ENCODE measurements at regions of chr3 and their contacts with region 1.

Region 1: DNA sequence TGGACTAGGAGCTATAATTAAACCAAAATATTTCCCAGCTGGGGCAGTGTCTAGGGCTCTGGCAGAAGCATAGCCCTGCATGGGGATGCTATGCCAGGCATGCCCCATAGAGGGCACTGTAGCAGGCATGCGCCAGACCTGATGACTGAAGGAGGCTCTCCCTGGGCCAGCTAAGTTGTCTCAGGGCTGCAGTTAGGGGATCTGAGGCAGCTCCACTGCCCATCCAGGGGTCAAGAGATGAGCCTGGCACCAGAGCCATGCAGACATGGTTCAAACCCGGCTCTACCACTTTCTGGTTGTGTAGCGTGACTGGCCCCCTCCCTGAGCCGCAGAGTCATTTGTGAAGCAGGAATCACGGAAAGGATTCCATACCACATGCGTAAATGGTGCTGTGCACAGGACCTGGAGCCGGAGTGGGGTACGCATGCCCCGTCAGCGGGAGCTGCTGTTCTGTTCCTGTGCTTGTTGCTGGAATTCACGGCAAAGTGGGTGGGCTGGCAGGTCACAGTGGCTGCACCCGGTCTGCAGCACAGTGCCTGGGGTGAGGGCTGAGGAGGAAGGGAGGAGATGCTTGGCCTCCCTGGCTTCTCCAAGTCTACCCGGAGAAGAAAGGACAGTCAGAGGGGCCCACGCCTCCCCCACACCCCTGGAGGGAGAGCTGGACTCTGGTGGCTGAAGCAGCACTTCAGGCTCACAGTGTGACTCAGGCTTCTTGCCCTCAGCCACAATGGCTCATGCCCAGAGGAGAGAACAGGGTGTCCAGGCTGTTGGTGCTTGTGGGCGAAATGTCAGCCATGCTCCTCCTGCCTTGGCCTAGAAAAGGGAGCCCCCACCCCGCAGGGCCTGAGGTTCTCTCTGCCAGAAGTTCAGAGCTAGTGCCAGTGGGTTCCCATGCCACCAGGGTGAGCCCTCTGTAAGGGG is 43.1 kb downstream of the DNASE1L3 start:
- DNase-seq: peak; percentile 76

Region 2: GRCh38 chr3:58041654-58042324 is 125.9 kb before region 1 on chr3:
- in situ Hi-C with region 1: loop called (anchors 25 kb)
- DNase-seq: no peak

Region 3: DNA sequence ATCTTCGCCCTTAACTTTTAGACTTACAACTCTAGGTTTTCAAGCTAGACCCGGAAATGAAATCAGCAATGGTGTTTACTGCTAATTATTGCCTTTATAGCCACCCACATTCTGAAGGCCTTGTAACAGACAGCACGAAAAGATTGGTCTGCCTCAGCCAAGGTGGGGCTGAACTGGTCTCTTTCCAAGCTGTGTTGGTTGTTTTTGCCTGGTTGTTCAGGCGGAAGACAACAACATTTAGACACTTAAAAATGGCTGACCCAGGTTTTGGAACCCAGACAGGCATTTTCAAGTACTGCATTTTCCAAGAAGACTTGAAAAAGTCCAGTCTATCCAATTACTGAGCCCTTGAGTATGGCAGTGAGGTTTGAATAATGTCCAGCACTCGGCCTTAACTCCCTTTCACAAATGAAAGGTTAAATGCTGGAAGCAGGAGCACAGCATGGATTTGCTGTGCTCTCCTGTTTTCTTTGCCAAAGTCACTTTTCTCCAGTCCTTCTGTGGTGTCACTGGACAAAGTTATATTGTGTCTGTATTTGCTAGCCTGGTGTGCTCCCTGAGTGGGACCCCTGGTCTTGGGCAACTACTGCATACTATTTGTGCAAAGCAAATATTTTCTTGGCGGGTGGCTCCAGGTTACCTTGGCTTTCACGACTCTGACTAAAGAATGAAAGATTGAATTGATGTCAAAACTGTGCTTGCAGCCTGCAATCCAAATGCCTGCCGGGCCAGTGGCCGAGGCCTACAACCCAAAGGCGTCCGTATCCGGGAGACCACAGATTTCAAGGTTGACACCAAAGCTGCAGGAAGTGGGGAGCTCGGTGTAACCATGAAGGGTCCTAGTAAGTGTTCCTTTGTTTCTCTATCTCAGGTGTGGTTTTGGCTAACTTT is 65.9 kb before region 1 on chr3:
- in situ Hi-C with region 1: no loop called
- DNase-seq: no peak

Region 4: GRCh38 chr3:58260261-58260731 is 92.6 kb after region 1 on chr3:
- in situ Hi-C with region 1: no loop called
- DNase-seq: peak; percentile 42

Region 5: GRCh38 chr3:58305882-58306711 is 138.4 kb after region 1 on chr3 and contains the starts of genes HTD2 and RPP14:
- in situ Hi-C with region 1: no loop called
- DNase-seq: peak; percentile 96
- total RNA-seq, gene HTD2: 11.2 and 14.4 TPM in 2 replicates
- total RNA-seq, gene RPP14: 25.4 and 26.4 TPM in 2 replicates

Measured in SK-MEL-5 (cell line).